Activated CD4-positive, alpha-beta T cell treated with anti-CD3 and anti-CD28 coated beads for 36 hours (primary cell): ENCODE measurements at regions of chr4 and their contacts with region 1.

Region 1: DNA sequence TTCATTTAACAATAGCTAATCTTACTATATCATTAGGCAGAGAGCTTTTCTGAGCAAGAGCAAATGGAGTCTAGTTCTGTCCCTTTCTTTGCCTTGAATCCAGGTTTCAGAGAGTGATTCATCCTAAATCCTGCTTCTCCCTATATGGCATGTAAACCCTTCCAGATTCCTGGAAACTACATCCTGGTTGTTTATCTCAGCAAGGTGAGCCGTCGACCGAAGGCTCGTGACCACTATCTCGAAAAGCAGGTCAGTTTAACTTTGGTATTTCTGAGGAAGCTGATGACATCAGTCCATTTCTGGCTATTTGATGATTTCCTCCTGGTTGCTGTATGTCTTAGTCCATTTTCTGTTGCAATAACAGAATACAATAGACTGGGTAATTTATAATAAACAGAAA is 40.7 kb upstream of the ERVMER34-1 start:
- DNase-seq: no peak
- ATAC-seq: no peak
- H3K4me3 Mint-ChIP-seq: no peak overlapping the region
- H3K27ac Mint-ChIP-seq: no peak overlapping the region
- H3K4me1 Mint-ChIP-seq: no peaks in the 10 kb centered on the region
- H3K27me3 Mint-ChIP-seq: no peaks in the 10 kb centered on the region

Region 2: DNA sequence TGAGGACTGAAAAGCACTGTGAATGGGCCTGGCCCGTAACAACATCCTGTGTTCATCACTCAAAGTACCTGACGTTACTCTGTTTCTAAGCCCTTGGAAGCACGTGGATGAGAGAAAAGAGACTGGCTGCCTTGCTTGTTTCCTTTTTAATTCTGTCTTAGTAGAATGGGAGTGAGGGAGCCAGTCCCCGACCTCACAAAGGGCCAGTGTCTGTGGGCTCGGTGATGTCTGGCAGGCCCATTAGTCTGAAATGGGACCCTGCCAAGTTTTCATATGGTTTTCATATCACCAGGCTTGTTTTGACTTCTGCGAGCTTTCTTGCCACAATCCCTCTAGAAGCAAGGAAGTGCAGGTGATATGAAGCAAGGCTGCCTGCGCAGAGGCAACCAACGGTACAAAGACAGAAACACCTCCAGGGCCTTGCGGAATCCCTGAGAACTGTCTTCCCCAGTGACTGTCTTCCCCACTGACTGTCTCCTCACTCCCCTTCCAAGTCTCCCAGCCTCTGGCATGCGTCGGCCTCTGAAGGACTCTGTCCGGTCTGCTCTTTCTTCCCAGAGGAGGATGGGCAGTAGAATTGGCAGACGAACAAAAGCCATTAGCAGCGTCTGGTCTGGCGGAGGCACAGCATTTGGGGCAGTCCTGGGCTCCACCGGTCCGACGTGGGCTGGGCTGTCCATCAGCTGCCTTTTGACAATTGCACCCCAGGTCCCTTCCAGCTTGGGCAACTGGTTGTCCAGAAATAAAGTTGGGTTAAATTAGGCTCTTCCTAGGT is 49.9 kb after region 1 on chr4:
- CTCF ChIA-PET with region 1: no interaction called
- POLR2A ChIA-PET with region 1: no interaction called
- intact Hi-C with region 1: loop called in 1 of 2 experiments (anchors 5 kb)
- DNase-seq: no peak
- ATAC-seq: no peak
- H3K4me3 Mint-ChIP-seq: no peak overlapping the region
- H3K27ac Mint-ChIP-seq: no peak overlapping the region
- H3K4me1 Mint-ChIP-seq: peaks cover 17% of the 10 kb centered on the region
- H3K27me3 Mint-ChIP-seq: no peaks in the 10 kb centered on the region